Activated T-helper 2 cell treated with anti-CD3 and anti-CD28 coated beads, Interferon-gamma antibody, Interleukin-2, Interleukin-4, amounts not matched to agents 10 μg/mL and 5 μg/mL and 100 μg/mL, durations not matched to agents 14 hours and 24 hours and 36 hours (primary cell): ENCODE measurements at regions of chr6 and their contacts with region 1.

Region 1: DNA sequence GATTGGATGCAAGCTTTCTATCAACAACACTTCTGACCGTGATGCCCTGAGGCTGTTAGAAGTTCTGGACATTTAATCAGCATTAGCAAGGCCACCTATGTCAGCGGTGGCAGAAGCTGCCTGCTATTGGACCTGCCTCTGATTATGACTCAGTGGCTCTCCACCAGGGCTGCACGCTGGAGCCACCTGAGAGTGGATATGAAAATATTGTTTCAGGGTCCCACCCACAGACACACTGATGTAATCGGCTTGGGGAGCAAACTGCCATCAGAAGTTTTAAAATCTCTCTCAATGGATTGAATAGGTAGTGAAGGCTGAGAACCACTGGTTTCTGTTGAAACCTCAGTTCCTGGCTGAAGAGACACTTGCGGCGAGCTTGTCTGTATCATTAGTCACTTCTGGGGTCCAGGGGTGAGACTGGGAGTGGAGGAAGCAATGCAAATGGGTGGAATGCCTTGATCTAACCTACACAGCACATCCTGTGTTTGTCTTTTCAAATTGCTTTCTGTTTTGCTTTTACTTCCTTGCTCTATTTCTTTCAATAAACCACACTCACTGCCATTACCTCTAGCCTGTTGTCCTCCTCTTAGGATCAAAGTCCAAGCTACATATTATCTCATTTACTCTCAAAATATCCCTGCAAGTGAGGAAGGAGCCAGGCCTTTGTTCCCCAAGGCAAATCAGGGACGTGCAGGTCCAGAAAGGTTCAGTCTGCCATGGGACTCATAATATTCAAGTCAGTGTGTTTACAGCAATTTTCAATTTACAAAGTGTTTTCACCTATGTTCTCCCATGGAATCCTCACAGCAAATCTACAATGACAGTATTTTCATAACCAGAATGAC is 4.2 kb downstream of the CLIC5 start:
- DNase-seq: peak; percentile 75
- H3K4me3 Mint-ChIP-seq: peak overlapping the region; percentile 30
- H3K27ac Mint-ChIP-seq: peak overlapping the region; percentile 80
- H3K4me1 Mint-ChIP-seq: peaks cover 58% of the 10 kb centered on the region
- H3K27me3 Mint-ChIP-seq: peaks cover 24% of the 10 kb centered on the region

Region 2: DNA sequence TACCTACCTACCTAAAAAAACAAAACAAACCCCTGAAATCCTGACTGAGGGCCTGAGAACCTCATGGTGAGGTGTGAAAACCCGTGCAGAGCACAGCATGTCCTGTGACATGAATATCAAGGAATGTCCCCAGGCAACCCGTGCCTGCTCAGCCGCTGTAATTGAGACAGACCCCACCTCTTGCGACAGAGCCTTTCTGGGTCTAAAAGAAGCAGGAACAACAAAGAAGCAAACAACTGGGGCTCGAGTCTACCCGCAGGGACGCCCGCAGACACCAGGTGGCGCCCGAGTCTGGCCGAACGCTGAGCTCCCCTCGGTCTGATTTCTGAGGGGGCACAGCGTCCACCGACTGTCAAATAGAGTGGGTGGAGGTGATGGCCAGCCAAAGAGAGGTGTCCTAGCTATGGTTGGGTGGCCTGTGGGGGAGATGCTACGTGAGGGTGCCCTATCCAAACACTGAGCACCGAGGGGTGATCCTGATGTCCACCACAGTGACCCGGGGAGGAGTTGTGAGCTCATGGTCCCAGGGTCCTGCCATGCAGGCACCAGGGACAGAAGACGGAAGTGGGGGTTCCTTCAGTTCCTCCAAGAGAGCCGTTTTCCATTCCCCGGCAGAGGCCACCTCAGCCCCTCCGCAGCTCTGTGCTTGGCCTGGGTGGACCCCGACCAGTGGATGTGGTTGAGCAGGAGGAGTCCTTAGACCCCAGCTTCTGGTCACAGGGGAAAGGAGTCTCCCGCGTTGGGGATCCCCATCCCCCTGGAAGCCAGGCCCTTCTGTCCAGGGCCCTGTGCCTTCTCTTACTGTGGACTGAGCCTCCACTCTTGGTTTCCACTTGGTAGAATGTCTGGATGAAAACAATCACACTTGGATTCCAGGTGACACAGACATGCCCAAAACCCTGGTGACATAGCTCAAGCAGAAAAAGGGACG is 1355.8 kb before region 1 on chr6:
- intact Hi-C with region 1: loop called (anchors 10 kb)
- DNase-seq: peak; percentile 55
- H3K4me3 Mint-ChIP-seq: peak overlapping the region; percentile 53
- H3K27ac Mint-ChIP-seq: peak overlapping the region; percentile 89
- H3K4me1 Mint-ChIP-seq: peaks cover 12% of the 10 kb centered on the region
- H3K27me3 Mint-ChIP-seq: no peaks in the 10 kb centered on the region

Region 3: GRCh38 chr6:45590225-45590624 is 421.2 kb before region 1 on chr6:
- intact Hi-C with region 1: loop called (anchors 5 kb)
- DNase-seq: no peak
- H3K4me3 Mint-ChIP-seq: no peak overlapping the region
- H3K27ac Mint-ChIP-seq: peak overlapping the region; percentile 86
- H3K4me1 Mint-ChIP-seq: peaks cover 86% of the 10 kb centered on the region
- H3K27me3 Mint-ChIP-seq: no peaks in the 10 kb centered on the region

Region 4: GRCh38 chr6:45737331-45738056 is 274.0 kb before region 1 on chr6:
- intact Hi-C with region 1: loop called (anchors 5 kb)
- DNase-seq: peak; percentile 35
- H3K4me3 Mint-ChIP-seq: peak overlapping the region; percentile 47
- H3K27ac Mint-ChIP-seq: peak overlapping the region; percentile 92
- H3K4me1 Mint-ChIP-seq: peaks cover 69% of the 10 kb centered on the region
- H3K27me3 Mint-ChIP-seq: no peaks in the 10 kb centered on the region

Region 5: DNA sequence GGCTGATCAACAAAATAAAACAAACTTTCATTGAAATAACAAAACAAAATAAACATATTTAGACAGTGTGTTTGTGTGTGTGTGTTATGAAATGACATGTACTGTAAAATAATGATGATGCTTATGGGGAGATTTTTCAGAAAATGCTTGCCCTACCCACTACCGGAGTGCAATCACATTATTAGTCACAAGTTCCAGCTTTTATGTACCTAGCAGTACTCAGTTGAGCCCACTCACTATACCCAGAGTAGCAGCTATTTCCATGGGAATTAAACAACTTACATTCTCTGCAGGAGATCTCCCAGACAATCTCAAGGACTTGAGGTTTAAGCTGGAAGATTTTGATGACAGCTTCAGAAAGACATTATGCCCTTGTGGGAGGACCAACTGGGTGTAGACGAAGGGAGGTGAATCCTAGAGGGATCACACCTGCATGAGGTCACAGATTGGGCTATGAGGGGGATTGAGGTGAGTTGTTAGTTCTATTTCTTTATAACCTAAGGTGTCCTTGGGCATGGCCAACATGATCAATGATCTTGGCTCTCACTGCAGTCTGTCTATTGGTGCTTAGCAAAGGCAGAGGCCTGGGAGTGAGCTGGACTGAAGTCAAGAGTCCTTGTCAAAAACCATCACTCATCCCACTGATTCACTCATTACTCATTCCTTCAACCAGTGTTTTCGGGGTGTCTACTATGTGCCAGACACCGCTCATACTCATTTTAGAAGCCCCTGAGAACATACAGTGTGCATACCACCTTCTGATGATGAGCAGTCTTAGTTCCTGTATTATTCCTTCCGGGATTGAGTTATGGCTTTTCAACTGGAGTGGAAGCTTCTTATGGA is 10.9 kb after region 1 on chr6:
- intact Hi-C with region 1: loop called (anchors 1 kb)
- DNase-seq: no peak
- H3K4me3 Mint-ChIP-seq: no peak overlapping the region
- H3K27ac Mint-ChIP-seq: no peak overlapping the region
- H3K4me1 Mint-ChIP-seq: peaks cover 8% of the 10 kb centered on the region
- H3K27me3 Mint-ChIP-seq: peaks cover 43% of the 10 kb centered on the region

Region 6: DNA sequence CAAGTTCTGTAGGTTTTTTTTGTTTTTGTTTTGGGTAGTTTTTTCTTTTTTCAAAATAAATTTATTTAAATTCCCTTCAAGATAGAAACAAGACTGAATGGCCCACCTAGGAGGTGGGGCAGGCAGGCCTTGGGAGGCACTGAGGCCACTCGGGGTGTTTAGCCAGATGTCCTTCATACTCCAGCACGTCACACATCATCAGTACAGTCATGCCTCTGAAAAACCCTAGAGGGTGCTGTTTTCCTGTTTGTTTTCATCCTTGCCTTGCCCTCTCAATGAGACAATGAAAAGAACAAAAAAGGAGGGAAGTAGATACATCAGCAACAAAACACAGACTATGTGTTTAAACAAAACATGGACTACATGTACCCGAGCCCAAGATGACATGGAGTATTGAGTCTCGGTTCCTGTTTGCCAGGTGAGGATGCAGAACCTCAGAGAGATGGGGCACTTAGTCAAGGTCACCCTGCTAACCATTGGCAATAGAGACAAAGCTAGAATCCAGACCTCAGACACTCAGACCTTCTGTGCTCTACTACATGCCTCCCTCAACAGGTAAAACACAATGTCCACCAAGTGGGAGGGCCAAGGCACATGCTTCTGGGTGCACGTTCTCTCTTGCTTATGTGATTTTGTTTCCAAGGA is 31.0 kb after region 1 on chr6:
- intact Hi-C with region 1: no loop called
- DNase-seq: no peak
- H3K4me3 Mint-ChIP-seq: no peak overlapping the region
- H3K27ac Mint-ChIP-seq: no peak overlapping the region
- H3K4me1 Mint-ChIP-seq: peaks cover 6% of the 10 kb centered on the region
- H3K27me3 Mint-ChIP-seq: peaks cover 5% of the 10 kb centered on the region

Region 7: DNA sequence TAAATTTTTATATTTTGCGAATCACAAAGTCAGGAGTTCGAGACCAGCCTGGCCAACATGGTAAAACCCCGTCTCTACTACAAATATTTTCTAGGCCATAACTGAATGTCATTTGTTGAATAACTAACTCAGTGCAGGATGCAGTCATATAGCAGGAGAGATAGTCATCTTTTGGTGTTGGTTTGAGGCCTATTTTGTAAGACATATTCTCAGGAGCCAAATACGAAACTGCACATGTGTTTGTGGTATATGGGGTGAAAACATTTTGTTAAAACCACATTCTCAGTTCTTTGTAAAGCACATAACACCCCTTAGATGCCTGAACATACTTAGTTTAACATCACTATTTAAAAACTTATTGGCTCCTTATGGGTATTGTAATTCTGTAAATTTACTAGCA is 164.0 kb after region 1 on chr6:
- intact Hi-C with region 1: loop called (anchors 2 kb)
- DNase-seq: peak; percentile 12
- H3K4me3 Mint-ChIP-seq: no peak overlapping the region
- H3K27ac Mint-ChIP-seq: no peak overlapping the region
- H3K4me1 Mint-ChIP-seq: peaks cover 18% of the 10 kb centered on the region
- H3K27me3 Mint-ChIP-seq: peaks cover 84% of the 10 kb centered on the region